H1 (cell line): ENCODE measurements at regions of chr1 and their contacts with region 1.

Region 1: DNA sequence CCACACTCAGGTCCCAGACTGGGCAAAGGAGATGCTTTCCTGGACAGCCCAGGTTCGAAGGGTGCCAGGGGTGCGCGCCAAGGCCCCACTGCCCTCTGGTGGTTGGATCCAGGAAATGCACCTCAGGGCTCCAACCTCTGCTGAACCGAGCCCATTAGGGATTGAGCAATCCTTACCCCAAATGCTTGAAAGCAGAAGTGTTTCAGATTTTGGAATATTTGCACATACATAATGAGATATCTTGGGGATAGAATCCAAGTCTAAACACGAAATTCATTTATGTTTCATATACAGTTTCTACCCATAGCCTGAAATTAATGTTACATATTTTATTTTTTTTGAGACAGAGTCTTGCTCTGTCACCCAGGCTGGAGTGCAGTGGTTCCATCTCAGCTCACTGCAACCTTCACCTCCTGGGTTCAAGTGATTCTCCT is 57.4 kb downstream of the SLC9A1 start:
- DNase-seq: peak; percentile 38 to 93
- H3K4me3 ChIP-seq: no peak overlapping the region
- H3K27ac ChIP-seq: no peak overlapping the region
- H3K4me1 ChIP-seq: peaks cover 0 to 20% (median 13%) of the 10 kb centered on the region in 4 experiments; a peak in 6 of 7 replicates
- H3K27me3 ChIP-seq: no peaks in the 10 kb centered on the region
- CTCF ChIP-seq: peak in 2 of 3 experiments; percentile 96; a peak in 3 of 4 replicates
- EP300 ChIP-seq: no peak
- POLR2A ChIP-seq: no peak
- RAD21 ChIP-seq: peak; percentile 98 to 99

Region 2: GRCh38 chr1:26970810-26971209 is 126.7 kb before region 1 on chr1:
- CTCF ChIA-PET with region 1: interaction called, 60 read pairs
- POLR2A ChIA-PET with region 1: no interaction called
- DNase-seq: no peak
- H3K4me3 ChIP-seq: no peak overlapping the region
- H3K27ac ChIP-seq: no peak overlapping the region
- H3K4me1 ChIP-seq: peaks cover 0 to 6% (median 3%) of the 10 kb centered on the region in 4 experiments; a peak in 3 of 7 replicates
- H3K27me3 ChIP-seq: no peaks in the 10 kb centered on the region
- CTCF ChIP-seq: no peak
- EP300 ChIP-seq: no peak
- POLR2A ChIP-seq: no peak
- RAD21 ChIP-seq: no peak

Region 3: GRCh38 chr1:27071049-27071416 is 26.5 kb before region 1 on chr1:
- CTCF ChIA-PET with region 1: interaction called, 69 read pairs
- POLR2A ChIA-PET with region 1: interaction called, 3 read pairs
- DNase-seq: no peak
- H3K4me3 ChIP-seq: no peak overlapping the region
- H3K27ac ChIP-seq: no peak overlapping the region
- H3K4me1 ChIP-seq: peaks cover 0 to 9% (median 6%) of the 10 kb centered on the region in 4 experiments; a peak in 5 of 7 replicates
- H3K27me3 ChIP-seq: no peaks in the 10 kb centered on the region
- CTCF ChIP-seq: no peak
- EP300 ChIP-seq: no peak
- POLR2A ChIP-seq: no peak
- RAD21 ChIP-seq: no peak

Region 4: GRCh38 chr1:27077968-27078367 is 19.5 kb before region 1 on chr1:
- CTCF ChIA-PET with region 1: interaction called, 25 read pairs
- POLR2A ChIA-PET with region 1: interaction called, 6 read pairs
- DNase-seq: no peak
- H3K4me3 ChIP-seq: no peak overlapping the region
- H3K27ac ChIP-seq: no peak overlapping the region
- H3K4me1 ChIP-seq: no peaks in the 10 kb centered on the region
- H3K27me3 ChIP-seq: no peaks in the 10 kb centered on the region
- CTCF ChIP-seq: no peak
- EP300 ChIP-seq: no peak
- POLR2A ChIP-seq: no peak
- RAD21 ChIP-seq: no peak